PC-3 (cell line): ENCODE measurements at regions of chr14 and their contacts with region 1.

Region 1: DNA sequence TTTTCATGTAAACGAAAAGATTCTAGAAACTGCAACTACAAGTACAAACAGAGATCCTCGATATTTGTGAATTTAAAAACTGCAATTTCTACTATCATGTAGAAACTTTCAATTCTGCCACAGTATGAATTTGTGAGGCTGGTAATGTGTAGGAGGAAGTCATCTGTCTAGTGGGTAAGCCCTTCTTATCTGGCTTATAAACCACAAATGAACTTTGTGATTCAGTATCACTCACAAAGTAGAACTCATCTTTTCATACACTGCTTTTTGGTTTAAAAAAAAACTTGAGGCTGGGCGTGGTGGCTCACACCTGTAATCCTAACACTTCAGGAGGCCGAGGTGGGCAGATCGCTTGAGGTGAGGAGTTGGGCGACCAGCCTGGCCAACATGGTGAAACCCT is 20.7 kb downstream of the GTF2A1 start:
- DNase-seq: no peak
- ATAC-seq: peak; percentile 40
- H3K4me3 ChIP-seq: no peak overlapping the region
- H3K27ac ChIP-seq: no peak overlapping the region
- H3K4me1 ChIP-seq: peaks cover 19% of the 10 kb centered on the region; the same call in 1 of the 2 replicates
- H3K27me3 ChIP-seq: no peaks in the 10 kb centered on the region
- CTCF ChIP-seq: no peak

Region 2: GRCh38 chr14:81062816-81063215 is 137.2 kb before region 1 on chr14:
- CTCF ChIA-PET with region 1: no interaction called
- POLR2A ChIA-PET with region 1: no interaction called
- intact Hi-C with region 1: loop called (anchors 5 kb)
- DNase-seq: peak; percentile 51
- ATAC-seq: peak; percentile 80
- H3K4me3 ChIP-seq: peak overlapping the region; percentile 14; the same call in 1 of the 2 replicates
- H3K27ac ChIP-seq: no peak overlapping the region
- H3K4me1 ChIP-seq: peaks cover 10% of the 10 kb centered on the region; the same call in 1 of the 2 replicates
- H3K27me3 ChIP-seq: peaks cover 31% of the 10 kb centered on the region; the same call in 1 of the 2 replicates
- CTCF ChIP-seq: peak; percentile 71

Region 3: GRCh38 chr14:81178063-81178462 is 22.0 kb before region 1 on chr14:
- CTCF ChIA-PET with region 1: no interaction called
- POLR2A ChIA-PET with region 1: interaction called, 3 read pairs
- intact Hi-C with region 1: loop called (anchors 2 kb)
- DNase-seq: peak; percentile 56
- ATAC-seq: peak; percentile 99
- H3K4me3 ChIP-seq: no peak overlapping the region
- H3K27ac ChIP-seq: no peak overlapping the region
- H3K4me1 ChIP-seq: peaks cover 12% of the 10 kb centered on the region; the same call in 1 of the 2 replicates
- H3K27me3 ChIP-seq: no peaks in the 10 kb centered on the region
- CTCF ChIP-seq: no peak

Region 4: DNA sequence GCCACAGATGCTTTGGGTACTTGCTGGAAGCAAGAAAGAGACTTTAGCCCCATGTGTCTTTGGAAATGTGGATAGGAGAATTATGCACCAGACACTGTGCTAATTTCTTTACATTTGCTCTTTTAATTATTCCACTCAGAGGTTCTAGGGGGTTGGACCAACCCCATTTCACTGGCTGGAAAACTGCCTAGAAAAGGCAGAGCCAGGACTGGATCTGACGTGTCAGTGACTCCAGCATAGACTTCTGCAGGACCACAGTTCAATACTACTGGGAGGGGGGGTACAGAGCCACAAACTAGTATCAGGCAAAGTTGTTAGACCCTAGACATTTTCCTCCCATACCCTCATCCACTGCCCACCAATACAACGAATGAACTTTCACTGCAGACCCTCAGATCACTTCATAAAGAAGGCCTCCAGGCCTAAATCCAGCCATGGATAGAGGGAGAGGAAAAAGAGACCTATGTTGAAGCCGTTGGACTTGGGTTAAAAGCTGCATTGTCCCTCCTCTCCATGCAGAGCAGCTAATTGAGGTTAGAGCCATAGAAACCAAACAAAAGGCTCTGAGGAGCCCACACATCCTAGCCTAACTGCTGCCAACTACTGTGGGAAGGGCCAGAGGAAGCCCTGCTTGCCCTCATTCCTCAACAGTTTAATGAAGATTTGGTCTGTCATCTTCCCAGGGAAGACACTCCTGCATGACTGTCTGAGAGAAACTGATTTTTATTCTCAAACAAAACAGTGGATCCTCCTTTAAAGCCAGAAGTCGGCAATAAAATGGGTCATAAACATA is 131.4 kb after region 1 on chr14:
- CTCF ChIA-PET with region 1: no interaction called
- POLR2A ChIA-PET with region 1: no interaction called
- intact Hi-C with region 1: no loop called
- DNase-seq: no peak
- ATAC-seq: peak; percentile 54
- H3K4me3 ChIP-seq: no peak overlapping the region
- H3K27ac ChIP-seq: no peak overlapping the region
- H3K4me1 ChIP-seq: peaks cover 5% of the 10 kb centered on the region
- H3K27me3 ChIP-seq: no peaks in the 10 kb centered on the region
- CTCF ChIP-seq: no peak